A549 (cell line): ENCODE measurements at regions of chr22 and their contacts with region 1.

Region 1: GRCh38 chr22:40346178-40347118 is at the start of gene ADSL:
- DNase-seq: peak; percentile 82
- ATAC-seq: peak; percentile 98
- H3K4me3 ChIP-seq: peak within 1 kb of the TSS; percentile 72
- H3K27ac ChIP-seq: peak within 1 kb of the TSS; percentile 87 to 97
- H3K4me1 ChIP-seq: peaks cover 20% of the 10 kb centered on the region
- CTCF ChIP-seq: no peak
- EP300 ChIP-seq: no peak
- POLR2A ChIP-seq: peak; percentile 95
- RAD21 ChIP-seq: no peak
- polyA plus RNA-seq, gene ADSL: 126 TPM in 2 replicates

Region 2: GRCh38 chr22:40036591-40037225 is 309.7 kb before region 1 on chr22:
- CTCF ChIA-PET with region 1: interaction called, 10 read pairs
- POLR2A ChIA-PET with region 1: no interaction called
- DNase-seq: peak; percentile 69 to 82
- ATAC-seq: peak; percentile 94 to 98
- H3K4me3 ChIP-seq: no peak overlapping the region
- H3K27ac ChIP-seq: no peak overlapping the region
- H3K4me1 ChIP-seq: no peaks in the 10 kb centered on the region
- CTCF ChIP-seq: peak; percentile 74
- EP300 ChIP-seq: no peak
- POLR2A ChIP-seq: no peak
- RAD21 ChIP-seq: peak; percentile 87 to 91

Region 3: GRCh38 chr22:40363059-40363458 is 16.6 kb after region 1 on chr22:
- CTCF ChIA-PET with region 1: interaction called, 31 read pairs
- POLR2A ChIA-PET with region 1: no interaction called
- DNase-seq: no peak
- ATAC-seq: no peak
- H3K4me3 ChIP-seq: no peak overlapping the region
- H3K27ac ChIP-seq: no peak overlapping the region
- H3K4me1 ChIP-seq: no peaks in the 10 kb centered on the region
- CTCF ChIP-seq: no peak
- EP300 ChIP-seq: no peak
- POLR2A ChIP-seq: no peak
- RAD21 ChIP-seq: no peak